Activated B cell treated with CpG ODN at 0.5 μM for 24 hours (primary cell): ENCODE measurements at regions of chr5 and their contacts with region 1.

Region 1: GRCh38 chr5:14644623-14645237 is 19.8 kb upstream of the OTULIN start:
- DNase-seq: no peak
- ATAC-seq: no peak
- H3K4me3 Mint-ChIP-seq: no peak overlapping the region
- H3K27ac Mint-ChIP-seq: no peak overlapping the region
- H3K4me1 Mint-ChIP-seq: no peaks in the 10 kb centered on the region
- H3K27me3 Mint-ChIP-seq: peaks cover 21% of the 10 kb centered on the region
- CTCF ChIP-seq: no peak

Region 2: GRCh38 chr5:13987843-13988464 is 656.8 kb before region 1 on chr5:
- CTCF ChIA-PET with region 1: interaction called, 6 read pairs
- POLR2A ChIA-PET with region 1: no interaction called
- intact Hi-C with region 1: loop called (anchors 1 kb)
- DNase-seq: no peak
- ATAC-seq: peak; percentile 50
- H3K4me3 Mint-ChIP-seq: no peak overlapping the region
- H3K27ac Mint-ChIP-seq: no peak overlapping the region
- H3K4me1 Mint-ChIP-seq: peaks cover 2% of the 10 kb centered on the region
- H3K27me3 Mint-ChIP-seq: peaks cover 15% of the 10 kb centered on the region
- CTCF ChIP-seq: peak; percentile 86

Region 3: DNA sequence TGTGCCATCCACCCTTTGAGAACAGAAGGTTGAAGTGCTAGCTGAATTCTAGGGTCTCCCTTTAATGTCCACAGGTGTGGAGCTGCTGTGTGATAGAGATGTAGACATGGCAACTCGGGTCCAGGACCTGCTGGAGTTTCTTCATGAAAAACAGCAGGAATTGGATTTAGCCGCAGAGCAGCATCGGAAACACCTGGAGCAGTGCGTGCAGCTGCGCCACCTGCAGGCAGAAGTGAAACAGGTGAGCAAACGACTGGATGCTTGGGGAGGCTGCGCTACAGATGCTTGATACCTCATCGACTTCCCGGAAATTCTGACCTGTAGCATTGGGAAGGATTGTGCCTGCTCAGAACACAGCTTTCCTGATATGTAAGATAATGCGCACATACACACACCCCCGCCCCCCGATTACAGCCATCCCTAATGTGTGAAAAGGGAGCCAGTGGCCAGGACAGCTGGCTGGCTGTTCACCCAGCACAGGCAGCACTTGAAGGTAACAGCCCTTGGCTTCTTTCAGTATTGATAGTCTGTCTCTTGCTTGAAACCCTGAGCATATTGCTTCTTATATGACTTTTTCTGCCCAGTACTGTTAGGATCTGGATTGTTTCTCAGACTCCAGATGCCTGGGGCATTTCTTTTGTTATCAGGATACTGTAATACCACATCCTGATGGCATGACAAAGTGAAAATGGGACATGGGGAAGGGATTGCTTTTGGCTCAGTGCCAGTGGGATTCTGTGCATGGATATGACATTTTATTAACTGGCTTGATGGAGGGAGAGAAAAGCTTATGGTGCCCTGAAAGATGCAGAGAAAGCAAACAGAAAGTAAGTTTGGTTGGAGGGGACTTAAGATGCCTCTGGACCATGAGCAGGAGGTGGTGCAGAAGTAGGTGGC is 279.9 kb before region 1 on chr5:
- CTCF ChIA-PET with region 1: interaction called, 32 read pairs
- POLR2A ChIA-PET with region 1: no interaction called
- intact Hi-C with region 1: loop called (anchors 1 kb)
- DNase-seq: no peak
- ATAC-seq: no peak
- H3K4me3 Mint-ChIP-seq: no peak overlapping the region
- H3K27ac Mint-ChIP-seq: no peak overlapping the region
- H3K4me1 Mint-ChIP-seq: peaks cover 19% of the 10 kb centered on the region
- H3K27me3 Mint-ChIP-seq: no peaks in the 10 kb centered on the region
- CTCF ChIP-seq: no peak

Region 4: DNA sequence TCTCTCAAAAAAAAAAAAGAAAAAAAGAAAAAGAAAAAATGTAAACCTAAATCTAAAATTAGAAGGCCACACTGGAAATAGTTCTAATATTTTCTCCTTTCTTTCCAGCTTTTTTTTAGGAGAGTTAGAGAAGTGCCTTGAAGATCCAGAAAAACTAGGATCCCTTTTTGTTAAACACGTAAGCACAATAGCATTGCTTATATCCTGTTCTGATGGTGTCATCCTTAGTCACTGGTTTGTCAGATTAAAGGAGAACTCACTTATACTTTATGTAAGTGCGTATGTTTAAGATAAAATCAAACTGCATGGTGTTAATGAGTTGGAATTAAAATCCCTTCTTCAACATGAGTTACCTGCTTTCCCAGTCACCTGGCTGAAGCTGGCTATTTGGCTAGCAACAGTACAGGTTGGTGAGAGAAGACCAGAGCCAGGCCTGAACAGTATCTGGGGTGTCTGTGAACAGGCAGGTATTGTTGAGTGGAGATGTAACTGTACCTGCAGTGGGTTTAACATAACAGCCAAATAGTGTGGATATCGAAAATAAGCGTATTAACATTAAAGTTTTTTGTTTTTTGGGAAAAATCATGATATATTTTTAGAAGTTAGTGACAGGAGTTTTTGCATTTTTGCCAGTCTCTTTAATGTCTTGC is 167.8 kb before region 1 on chr5:
- CTCF ChIA-PET with region 1: interaction called, 10 read pairs
- POLR2A ChIA-PET with region 1: no interaction called
- intact Hi-C with region 1: no loop called
- DNase-seq: no peak
- ATAC-seq: no peak
- H3K4me3 Mint-ChIP-seq: no peak overlapping the region
- H3K27ac Mint-ChIP-seq: no peak overlapping the region
- H3K4me1 Mint-ChIP-seq: no peaks in the 10 kb centered on the region
- H3K27me3 Mint-ChIP-seq: no peaks in the 10 kb centered on the region
- CTCF ChIP-seq: no peak

Region 5: DNA sequence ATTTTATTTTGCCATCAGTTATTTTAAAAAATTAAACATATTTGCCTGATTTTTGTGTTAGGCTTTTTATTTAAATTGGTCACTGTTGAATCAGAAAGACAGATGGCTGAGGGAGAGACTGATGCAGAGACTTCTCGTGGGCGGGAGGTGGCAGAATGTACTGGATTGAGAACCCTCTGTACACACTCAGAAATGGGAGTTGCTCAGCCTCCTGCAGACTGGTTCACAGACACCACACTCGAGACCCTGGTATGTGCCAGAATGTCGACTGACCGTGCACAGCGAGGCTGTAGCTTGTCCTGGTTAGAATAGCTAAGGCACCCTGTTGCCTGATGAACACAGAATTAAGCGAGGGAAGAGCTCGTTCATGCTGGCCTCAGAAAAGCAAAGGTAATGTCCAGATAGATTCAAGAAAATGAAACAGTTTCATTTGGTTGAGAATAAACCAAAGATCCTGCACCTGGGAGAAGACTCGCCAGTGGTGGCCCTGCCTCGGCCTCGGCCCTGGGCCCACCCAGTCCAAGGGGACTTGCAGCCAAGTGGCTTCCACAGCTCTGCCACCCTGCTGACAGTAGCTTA is 134.5 kb before region 1 on chr5:
- CTCF ChIA-PET with region 1: interaction called, 3 read pairs
- POLR2A ChIA-PET with region 1: no interaction called
- intact Hi-C with region 1: loop called (anchors 5 kb)
- DNase-seq: no peak
- ATAC-seq: no peak
- H3K4me3 Mint-ChIP-seq: no peak overlapping the region
- H3K27ac Mint-ChIP-seq: no peak overlapping the region
- H3K4me1 Mint-ChIP-seq: no peaks in the 10 kb centered on the region
- H3K27me3 Mint-ChIP-seq: no peaks in the 10 kb centered on the region
- CTCF ChIP-seq: no peak

Region 6: DNA sequence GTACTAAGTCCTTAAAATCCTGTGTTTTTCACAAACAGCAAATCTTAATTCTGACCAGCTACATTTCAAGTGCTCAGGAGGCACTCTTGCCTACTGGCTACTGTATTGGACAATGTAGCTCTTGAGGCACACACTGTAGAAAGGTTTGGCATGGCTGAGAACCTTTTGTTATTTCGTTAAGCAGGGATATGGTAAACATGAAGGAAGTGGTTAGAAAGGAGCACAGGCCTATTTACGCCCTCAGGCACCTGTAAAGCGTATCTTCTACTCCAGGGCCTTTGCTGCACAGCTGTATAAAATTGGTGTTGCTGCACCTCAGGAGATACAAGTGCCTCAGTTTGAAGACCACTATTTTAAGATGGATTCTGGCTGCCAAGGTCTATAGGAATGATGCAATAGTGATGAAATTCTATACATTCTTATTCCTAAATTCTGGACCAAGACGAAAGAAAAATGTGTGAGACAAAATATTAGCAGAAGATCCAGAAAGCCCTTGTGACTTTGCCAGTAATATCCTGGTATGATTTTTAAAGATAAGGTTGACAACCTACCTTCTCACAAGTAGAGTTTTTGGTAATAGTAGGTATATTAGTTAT is 10.5 kb after region 1 on chr5:
- CTCF ChIA-PET with region 1: interaction called, 18 read pairs
- POLR2A ChIA-PET with region 1: no interaction called
- intact Hi-C with region 1: no loop called
- DNase-seq: no peak
- ATAC-seq: no peak
- H3K4me3 Mint-ChIP-seq: no peak overlapping the region
- H3K27ac Mint-ChIP-seq: peak overlapping the region; percentile 86
- H3K4me1 Mint-ChIP-seq: peaks cover 45% of the 10 kb centered on the region
- H3K27me3 Mint-ChIP-seq: no peaks in the 10 kb centered on the region
- CTCF ChIP-seq: no peak